ENCODE measurements at regions of chr12 and their contacts with region 1.

Region 1: GRCh38 chr12:113462117-113462774 is 9.4 kb downstream of the LHX5 start:
- DNase-seq: peak; percentile 85
- H3K4me3 Mint-ChIP-seq: peak overlapping the region; percentile 68
- H3K27ac Mint-ChIP-seq: no peak overlapping the region
- H3K4me1 Mint-ChIP-seq: peaks cover 23% of the 10 kb centered on the region
- H3K27me3 Mint-ChIP-seq: peaks cover 50% of the 10 kb centered on the region

Region 2: GRCh38 chr12:113473942-113474341 is 11.7 kb after region 1 on chr12:
- CTCF ChIA-PET with region 1: interaction called, 10 read pairs
- intact Hi-C with region 1: no loop called
- DNase-seq: no peak
- H3K4me3 Mint-ChIP-seq: peak overlapping the region; percentile 14
- H3K27ac Mint-ChIP-seq: no peak overlapping the region
- H3K4me1 Mint-ChIP-seq: peaks cover 7% of the 10 kb centered on the region
- H3K27me3 Mint-ChIP-seq: peaks cover 83% of the 10 kb centered on the region

Region 3: GRCh38 chr12:113735131-113735530 is 272.9 kb after region 1 on chr12:
- CTCF ChIA-PET with region 1: no interaction called
- intact Hi-C with region 1: loop called (anchors 10 kb)
- DNase-seq: no peak
- H3K4me3 Mint-ChIP-seq: no peak overlapping the region
- H3K27ac Mint-ChIP-seq: no peak overlapping the region
- H3K4me1 Mint-ChIP-seq: no peaks in the 10 kb centered on the region
- H3K27me3 Mint-ChIP-seq: peaks cover 20% of the 10 kb centered on the region

Region 4: GRCh38 chr12:114284041-114284440 is 821.8 kb after region 1 on chr12:
- CTCF ChIA-PET with region 1: no interaction called
- intact Hi-C with region 1: no loop called
- DNase-seq: no peak
- H3K4me3 Mint-ChIP-seq: no peak overlapping the region
- H3K27ac Mint-ChIP-seq: no peak overlapping the region
- H3K4me1 Mint-ChIP-seq: no peaks in the 10 kb centered on the region
- H3K27me3 Mint-ChIP-seq: peaks cover 8% of the 10 kb centered on the region